ENCODE measurements at regions of chr7 and their contacts with region 1.

Region 1: GRCh38 chr7:91034459-91035368 is 229.5 kb upstream of the FZD1 start:
- DNase-seq: peak; percentile 56
- ATAC-seq: no peak
- H3K4me3 ChIP-seq: no peak overlapping the region
- H3K4me3 Mint-ChIP-seq: no peak overlapping the region
- H3K27ac ChIP-seq: no peak overlapping the region
- H3K27ac Mint-ChIP-seq: no peak overlapping the region
- H3K4me1 ChIP-seq: no peaks in the 10 kb centered on the region
- H3K4me1 Mint-ChIP-seq: peaks cover 6% of the 10 kb centered on the region
- H3K27me3 ChIP-seq: no peaks in the 10 kb centered on the region
- H3K27me3 Mint-ChIP-seq: no peaks in the 10 kb centered on the region
- CTCF ChIP-seq: peak; percentile 68

Region 2: DNA sequence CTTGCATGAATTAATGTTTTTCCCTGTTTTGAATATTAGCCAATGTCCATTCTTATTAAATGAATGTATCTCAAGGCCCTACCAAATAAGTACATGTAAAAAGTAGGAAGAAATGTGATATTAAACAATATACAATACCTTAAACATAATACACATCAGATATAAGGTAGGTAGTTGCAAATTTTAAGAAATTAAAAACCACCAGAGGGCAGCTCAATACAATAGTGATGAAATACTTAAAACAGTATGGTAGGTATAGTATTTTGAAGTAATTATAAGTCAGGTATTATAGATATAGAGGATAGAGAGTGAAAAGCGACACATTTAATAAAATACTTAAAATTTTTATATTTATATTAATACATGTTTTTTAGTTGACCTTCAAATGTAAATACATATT is 482.2 kb before region 1 on chr7:
- CTCF ChIA-PET with region 1: interaction called, 11 read pairs
- POLR2A ChIA-PET with region 1: no interaction called
- intact Hi-C with region 1: loop called (anchors 1 kb)
- DNase-seq: peak; percentile 44
- ATAC-seq: no peak
- H3K4me3 ChIP-seq: no peak overlapping the region
- H3K4me3 Mint-ChIP-seq: no peak overlapping the region
- H3K27ac ChIP-seq: no peak overlapping the region
- H3K27ac Mint-ChIP-seq: no peak overlapping the region
- H3K4me1 ChIP-seq: no peaks in the 10 kb centered on the region
- H3K4me1 Mint-ChIP-seq: peaks cover under 1% of the 10 kb centered on the region
- H3K27me3 ChIP-seq: peaks cover 0 to 5% (median 0%) of the 10 kb centered on the region in 4 experiments
- H3K27me3 Mint-ChIP-seq: peaks cover 4% of the 10 kb centered on the region
- CTCF ChIP-seq: peak; percentile 61

Region 3: DNA sequence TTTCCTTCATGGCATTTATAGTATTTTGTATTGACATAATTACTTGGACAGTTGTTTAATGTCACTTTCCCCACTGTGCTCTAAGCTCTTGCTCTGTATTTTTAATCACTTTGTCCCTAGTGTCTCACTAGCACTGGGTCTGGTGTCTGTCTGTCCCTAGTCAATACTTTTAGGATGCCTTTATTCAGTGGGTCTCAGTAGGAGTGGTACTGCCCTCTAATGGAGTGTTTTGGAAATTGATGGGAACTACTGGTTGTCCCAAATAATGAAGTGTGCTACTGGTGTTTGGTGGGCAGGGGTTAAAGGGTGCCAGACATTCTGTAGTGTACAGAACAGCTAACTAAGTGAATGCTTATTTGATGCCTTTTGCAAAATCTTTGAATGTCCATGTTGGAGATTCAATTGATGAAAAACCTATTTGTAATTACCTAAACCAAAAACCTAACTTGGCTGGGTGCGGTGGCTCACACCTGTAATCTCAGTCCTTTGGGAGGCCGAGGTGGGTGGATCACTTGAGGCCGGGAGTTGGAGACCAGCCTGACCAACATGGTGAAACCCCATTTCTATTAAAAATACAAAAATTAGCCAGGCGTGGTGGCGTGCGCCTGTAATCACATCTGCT is 405.3 kb before region 1 on chr7:
- CTCF ChIA-PET with region 1: interaction called, 14 read pairs
- POLR2A ChIA-PET with region 1: no interaction called
- intact Hi-C with region 1: no loop called
- DNase-seq: peak; percentile 75
- ATAC-seq: peak; percentile 86
- H3K4me3 ChIP-seq: no peak overlapping the region
- H3K4me3 Mint-ChIP-seq: no peak overlapping the region
- H3K27ac ChIP-seq: no peak overlapping the region
- H3K27ac Mint-ChIP-seq: no peak overlapping the region
- H3K4me1 ChIP-seq: no peaks in the 10 kb centered on the region
- H3K4me1 Mint-ChIP-seq: peaks cover 13% of the 10 kb centered on the region
- H3K27me3 ChIP-seq: no peaks in the 10 kb centered on the region
- H3K27me3 Mint-ChIP-seq: no peaks in the 10 kb centered on the region
- CTCF ChIP-seq: peak; percentile 75

Region 4: DNA sequence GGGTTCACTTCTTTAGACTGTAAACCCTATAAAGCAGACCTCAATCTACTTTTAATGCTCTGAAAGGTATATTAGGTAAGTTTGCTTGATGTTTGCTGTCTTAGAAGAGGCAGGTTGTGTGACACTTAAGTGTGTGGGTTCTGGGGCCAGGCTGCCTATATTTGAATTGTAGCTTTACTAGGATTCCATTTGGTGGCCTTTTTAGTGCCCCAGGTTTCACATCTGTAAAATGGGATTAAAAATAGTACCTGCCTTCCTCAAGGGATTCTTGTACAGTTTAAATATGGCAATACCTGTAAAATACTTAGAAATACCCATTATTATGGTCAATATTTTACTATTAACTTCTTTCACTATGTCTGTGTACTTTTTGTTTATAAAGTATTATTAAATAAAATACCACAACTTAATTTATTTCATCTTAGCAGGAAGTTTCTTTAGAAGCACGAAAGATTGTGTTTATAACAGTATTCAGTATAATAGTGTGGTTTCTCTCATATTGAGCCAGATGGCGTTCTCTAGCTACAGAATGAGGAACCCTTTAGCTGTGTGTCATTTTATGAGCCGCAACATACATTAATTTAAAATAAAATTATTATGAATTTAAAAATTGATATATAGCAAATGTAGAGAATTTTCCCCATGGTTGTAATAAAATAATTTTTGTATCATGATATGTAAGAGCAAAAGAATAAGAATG is 344.4 kb before region 1 on chr7:
- CTCF ChIA-PET with region 1: interaction called, 28 read pairs
- POLR2A ChIA-PET with region 1: no interaction called
- intact Hi-C with region 1: loop called (anchors 1 kb)
- DNase-seq: no peak
- ATAC-seq: peak; percentile 33
- H3K4me3 ChIP-seq: peak overlapping the region in 1 of 5 experiments; percentile 32
- H3K4me3 Mint-ChIP-seq: no peak overlapping the region
- H3K27ac ChIP-seq: no peak overlapping the region
- H3K27ac Mint-ChIP-seq: no peak overlapping the region
- H3K4me1 ChIP-seq: peaks cover 10 to 17% of the 10 kb centered on the region in 2 donors
- H3K4me1 Mint-ChIP-seq: peaks cover 35% of the 10 kb centered on the region
- H3K27me3 ChIP-seq: no peaks in the 10 kb centered on the region
- H3K27me3 Mint-ChIP-seq: no peaks in the 10 kb centered on the region
- CTCF ChIP-seq: peak; percentile 62

Region 5: DNA sequence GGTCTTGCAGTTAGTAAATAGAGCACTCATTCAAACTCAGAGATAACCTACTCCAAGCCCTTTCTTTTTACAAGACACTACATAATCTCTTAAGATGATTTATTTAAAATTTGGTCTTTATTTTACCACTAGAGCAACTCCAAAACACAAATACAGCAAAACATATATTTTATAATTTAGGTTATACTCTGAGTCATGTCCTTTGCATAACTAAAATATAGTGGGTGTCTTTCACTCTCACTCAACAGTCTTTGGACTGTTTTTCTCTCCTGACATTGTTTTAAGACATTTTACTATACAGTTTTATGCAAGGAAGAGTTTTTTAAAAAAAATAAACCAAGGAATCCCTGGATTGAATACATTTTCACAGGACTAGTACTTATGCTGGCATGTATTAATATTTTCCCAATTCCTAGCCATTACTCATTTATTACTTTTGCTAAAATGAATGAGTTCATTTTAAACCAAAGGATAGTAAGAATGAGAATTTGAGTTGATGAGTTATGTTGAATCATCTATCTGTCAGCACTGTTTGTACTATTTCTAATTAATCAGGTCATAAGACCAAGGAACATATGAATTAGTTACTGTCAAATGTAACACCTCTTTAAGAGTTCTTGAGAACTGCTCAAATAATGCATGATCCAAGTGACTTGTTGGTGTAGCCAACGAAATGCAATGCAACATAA is 73.5 kb before region 1 on chr7:
- CTCF ChIA-PET with region 1: no interaction called
- POLR2A ChIA-PET with region 1: no interaction called
- intact Hi-C with region 1: no loop called
- DNase-seq: no peak
- ATAC-seq: no peak
- H3K4me3 ChIP-seq: no peak overlapping the region
- H3K4me3 Mint-ChIP-seq: no peak overlapping the region
- H3K27ac ChIP-seq: no peak overlapping the region
- H3K27ac Mint-ChIP-seq: no peak overlapping the region
- H3K4me1 ChIP-seq: peaks cover 2 to 7% of the 10 kb centered on the region in 2 donors
- H3K4me1 Mint-ChIP-seq: peaks cover 15% of the 10 kb centered on the region
- H3K27me3 ChIP-seq: no peaks in the 10 kb centered on the region
- H3K27me3 Mint-ChIP-seq: no peaks in the 10 kb centered on the region
- CTCF ChIP-seq: no peak